GM12878 (cell line): ENCODE measurements at regions of chr5 and their contacts with region 1.

Region 1: DNA sequence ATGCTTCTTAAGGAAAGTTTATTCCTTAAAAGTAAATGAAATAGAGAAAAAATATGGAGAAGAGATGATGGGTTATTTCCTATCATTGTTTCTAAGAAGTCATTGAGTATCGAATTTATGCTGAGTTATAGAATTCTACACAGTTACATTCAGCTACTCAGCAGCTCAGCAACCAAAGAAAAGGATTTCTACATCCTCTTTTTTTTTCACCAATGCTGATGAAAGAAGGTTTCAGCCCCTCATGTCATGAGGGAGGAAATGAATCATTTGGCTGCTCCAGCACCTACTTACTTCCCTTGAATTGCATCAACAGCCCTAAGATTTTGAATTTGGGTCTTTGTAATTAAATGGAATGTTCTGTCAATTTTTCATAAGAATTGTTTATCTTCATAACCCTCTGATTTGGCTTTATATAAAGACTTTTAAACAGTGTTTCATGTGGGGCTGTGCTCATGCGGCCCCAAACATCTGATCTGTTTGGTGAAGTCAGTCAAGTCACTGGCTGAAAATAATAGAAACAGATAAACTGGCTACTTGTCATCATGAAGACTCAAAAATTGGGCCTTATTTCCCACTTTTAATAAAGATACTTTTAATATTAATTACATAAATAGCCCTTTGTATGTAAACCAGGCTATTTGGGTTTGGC is 18.5 kb upstream of the SNX2 start:
- DNase-seq: no peak
- ATAC-seq: peak; percentile 86
- H3K4me3 ChIP-seq: no peak overlapping the region
- H3K27ac ChIP-seq: peak overlapping the region; percentile 66; the same call in 1 of the 2 replicates
- H3K4me1 ChIP-seq: peaks cover 17% of the 10 kb centered on the region
- H3K27me3 ChIP-seq: no peaks in the 10 kb centered on the region
- CTCF ChIP-seq: no peak
- EP300 ChIP-seq: no peak
- POLR2A ChIP-seq: no peak
- RAD21 ChIP-seq: peak; percentile 11; the same call in 1 of the 2 replicates

Region 2: GRCh38 chr5:122723606-122724352 is 32.6 kb before region 1 on chr5:
- CTCF ChIA-PET with region 1: interaction called, 6 read pairs
- POLR2A ChIA-PET with region 1: no interaction called
- RAD21 ChIA-PET with region 1: no interaction called
- SMC1A ChIA-PET with region 1: interaction called, 5 read pairs
- in situ Hi-C with region 1: no loop called
- intact Hi-C with region 1: loop called (anchors 2 kb)
- DNase-seq: peak; percentile 59
- ATAC-seq: peak; percentile 94
- H3K4me3 ChIP-seq: 0 out of 2 replicates have a peak overlapping the region, but pooled peaks have one; percentile 6
- H3K27ac ChIP-seq: peak overlapping the region; percentile 20; the same call in 1 of the 2 replicates
- H3K4me1 ChIP-seq: peaks cover 12% of the 10 kb centered on the region
- H3K27me3 ChIP-seq: no peaks in the 10 kb centered on the region
- CTCF ChIP-seq: no peak
- EP300 ChIP-seq: peak; percentile 42 to 62; a peak in 2 of 4 replicates
- POLR2A ChIP-seq: no peak
- RAD21 ChIP-seq: 0 out of 2 replicates have a peak, but pooled peaks have one; percentile 11

Region 3: DNA sequence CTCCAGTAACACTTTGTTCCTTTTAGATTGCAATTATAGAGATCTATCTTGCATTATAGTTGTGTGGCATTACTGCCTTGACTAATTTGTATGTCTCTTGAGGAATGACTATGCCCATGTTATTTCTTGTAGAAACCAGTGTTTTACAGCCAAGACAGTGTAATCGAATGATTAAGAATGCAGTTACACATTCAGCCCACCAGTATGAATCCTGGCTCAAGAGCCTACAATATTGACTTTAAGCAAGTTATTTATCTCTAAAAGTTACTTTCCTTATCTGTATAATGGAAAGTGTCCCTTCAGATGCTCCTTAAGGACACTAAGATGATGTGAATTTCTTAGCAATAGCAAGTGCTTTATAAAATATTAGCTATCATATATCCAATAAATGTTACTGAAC is 79.3 kb after region 1 on chr5:
- CTCF ChIA-PET with region 1: no interaction called
- POLR2A ChIA-PET with region 1: no interaction called
- RAD21 ChIA-PET with region 1: no interaction called
- SMC1A ChIA-PET with region 1: no interaction called
- in situ Hi-C with region 1: no loop called
- intact Hi-C with region 1: no loop called
- DNase-seq: no peak
- ATAC-seq: peak; percentile 33; the same call in 2 of the 3 replicates
- H3K4me3 ChIP-seq: no peak overlapping the region
- H3K27ac ChIP-seq: no peak overlapping the region
- H3K4me1 ChIP-seq: no peaks in the 10 kb centered on the region
- H3K27me3 ChIP-seq: no peaks in the 10 kb centered on the region
- CTCF ChIP-seq: no peak
- EP300 ChIP-seq: no peak
- POLR2A ChIP-seq: no peak
- RAD21 ChIP-seq: no peak

Region 4: DNA sequence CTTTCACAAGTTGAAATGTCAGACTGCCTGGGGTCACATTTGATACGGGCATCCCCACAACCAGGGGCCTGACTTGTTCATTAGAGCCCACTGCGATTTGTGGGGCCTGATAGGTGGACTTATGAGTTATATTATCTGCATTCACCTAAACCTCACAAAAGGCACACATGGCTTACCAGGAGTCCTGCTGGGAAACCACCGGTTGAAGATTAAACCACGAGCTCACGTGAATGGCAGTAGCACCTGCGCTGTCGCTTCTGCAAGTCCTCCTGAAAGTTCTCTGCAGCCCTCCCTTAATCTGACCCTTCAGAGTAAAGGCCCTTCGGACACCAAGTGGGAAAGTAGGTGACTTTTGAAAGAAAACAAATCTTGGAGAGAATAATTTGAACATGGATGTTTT is 211.2 kb after region 1 on chr5:
- CTCF ChIA-PET with region 1: no interaction called
- POLR2A ChIA-PET with region 1: no interaction called
- RAD21 ChIA-PET with region 1: no interaction called
- SMC1A ChIA-PET with region 1: no interaction called
- in situ Hi-C with region 1: no loop called
- intact Hi-C with region 1: no loop called
- DNase-seq: peak; percentile 43
- ATAC-seq: peak; percentile 99
- H3K4me3 ChIP-seq: no peak overlapping the region
- H3K27ac ChIP-seq: no peak overlapping the region
- H3K4me1 ChIP-seq: peaks cover 7% of the 10 kb centered on the region
- H3K27me3 ChIP-seq: no peaks in the 10 kb centered on the region
- CTCF ChIP-seq: no peak
- EP300 ChIP-seq: no peak
- POLR2A ChIP-seq: no peak
- RAD21 ChIP-seq: no peak